SK-N-SH (cell line): ENCODE measurements at regions of chr13 and their contacts with region 1.

Region 1: DNA sequence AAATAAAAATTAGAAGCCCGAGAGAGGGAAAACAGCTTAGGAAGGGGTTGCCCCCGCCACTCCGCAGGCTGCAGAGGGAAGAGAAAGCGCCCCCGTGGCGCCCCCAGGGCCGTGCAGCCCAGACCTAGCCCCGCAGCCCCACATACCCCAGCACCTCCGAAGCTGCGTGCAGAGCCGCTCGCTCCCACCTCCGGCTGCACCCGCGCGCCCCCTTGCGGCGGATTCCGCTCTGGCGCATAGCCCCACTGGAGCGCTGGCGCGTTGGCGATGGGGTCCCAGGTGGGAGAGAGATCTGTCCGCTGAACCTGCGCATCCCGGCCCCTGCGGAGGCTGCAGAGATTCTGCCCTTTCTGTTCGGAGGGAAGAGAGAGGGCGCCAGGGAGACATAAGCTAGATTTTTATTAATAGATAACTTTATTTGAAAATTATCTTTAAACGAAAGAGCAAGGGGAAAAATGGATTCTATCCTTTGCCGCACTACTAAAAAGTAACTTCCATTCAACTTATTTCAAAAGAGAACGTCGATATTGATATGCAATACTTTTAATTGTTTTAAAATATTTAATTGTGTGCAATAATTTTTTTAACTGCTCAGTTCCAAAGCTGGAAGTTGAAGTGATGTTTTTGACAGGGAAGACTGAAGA is 11.7 kb upstream of the CLN5 start:
- DNase-seq: peak; percentile 92
- H3K4me3 ChIP-seq: peak overlapping the region; percentile 38 to 53; a peak in 3 of 4 replicates
- H3K27ac ChIP-seq: no peak overlapping the region
- H3K4me1 ChIP-seq: peaks cover 0 to 5% of the 10 kb centered on the region in 2 experiments; a peak in 2 of 4 replicates
- H3K27me3 ChIP-seq: no peaks in the 10 kb centered on the region
- CTCF ChIP-seq: peak; percentile 93
- EP300 ChIP-seq: no peak
- RAD21 ChIP-seq: peak; percentile 69

Region 2: DNA sequence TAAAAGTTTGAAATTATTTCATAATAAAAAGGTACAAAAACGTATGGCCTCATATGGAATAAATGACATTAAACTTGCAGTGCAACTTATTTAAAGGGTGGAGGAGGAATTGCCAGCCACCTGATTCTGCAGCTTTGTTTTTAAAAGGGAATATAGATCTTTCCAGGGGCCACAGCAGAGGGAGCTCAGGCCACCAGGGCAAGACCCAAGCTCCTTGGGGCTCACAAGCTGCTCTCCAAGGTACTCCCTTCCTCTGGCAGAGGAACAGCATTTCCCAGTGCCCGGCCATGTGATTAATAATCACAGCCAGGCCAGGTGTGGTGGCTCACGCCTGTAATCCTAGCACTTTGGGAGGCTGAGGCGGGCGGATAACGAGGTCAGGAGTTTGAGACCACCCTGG is 25.7 kb before region 1 on chr13:
- CTCF ChIA-PET with region 1: interaction called, 11 read pairs
- POLR2A ChIA-PET with region 1: no interaction called
- DNase-seq: no peak
- H3K4me3 ChIP-seq: no peak overlapping the region
- H3K27ac ChIP-seq: no peak overlapping the region
- H3K4me1 ChIP-seq: no peaks in the 10 kb centered on the region
- H3K27me3 ChIP-seq: no peaks in the 10 kb centered on the region
- CTCF ChIP-seq: no peak
- EP300 ChIP-seq: no peak
- RAD21 ChIP-seq: no peak

Region 3: GRCh38 chr13:76991796-76992547 is 11.8 kb after region 1 on chr13 and contains the start of gene CLN5:
- CTCF ChIA-PET with region 1: interaction called, 34 read pairs
- POLR2A ChIA-PET with region 1: no interaction called
- DNase-seq: peak; percentile 97
- H3K4me3 ChIP-seq: peak within 1 kb of the TSS; percentile 86 to 94
- H3K27ac ChIP-seq: peak within 1 kb of the TSS; percentile 74 to 79
- H3K4me1 ChIP-seq: peaks cover 11 to 13% of the 10 kb centered on the region in 2 experiments; a peak in 3 of 4 replicates
- H3K27me3 ChIP-seq: no peaks in the 10 kb centered on the region
- CTCF ChIP-seq: no peak
- EP300 ChIP-seq: 0 out of 4 replicates have a peak, but pooled peaks of 1 of the 2 experiments have one; percentile 15
- RAD21 ChIP-seq: no peak
- polyA plus RNA-seq, gene CLN5: 11.6 and 13.3 TPM in 2 replicates

Region 4: DNA sequence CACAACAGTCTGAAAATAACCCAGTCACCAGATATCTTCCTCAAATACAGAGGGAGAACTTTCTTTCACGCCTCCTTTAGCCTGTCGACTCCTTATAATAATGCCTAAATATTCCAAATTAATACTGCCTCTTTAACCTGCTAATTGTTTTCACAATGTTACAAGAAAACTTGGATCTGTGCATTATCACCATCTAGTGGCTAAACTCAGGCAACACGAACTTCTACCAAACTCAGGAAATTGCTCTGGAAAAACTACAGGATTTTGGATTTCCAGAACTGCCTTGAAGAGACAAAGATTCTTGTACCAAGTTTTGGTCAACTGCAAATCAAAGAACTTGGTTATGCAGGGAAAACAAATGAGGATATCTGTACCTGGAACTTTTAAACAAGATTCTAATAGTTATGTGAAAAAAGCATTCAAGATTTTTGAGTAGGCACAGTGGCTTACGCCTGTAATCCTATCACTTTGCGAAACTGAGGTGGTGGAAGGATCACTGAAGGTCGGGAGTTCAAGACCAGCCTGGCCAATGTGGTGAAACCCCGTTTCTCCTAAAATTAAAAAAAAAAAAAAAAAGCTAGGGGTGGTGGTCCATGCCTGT is 22.5 kb after region 1 on chr13:
- CTCF ChIA-PET with region 1: interaction called, 17 read pairs
- POLR2A ChIA-PET with region 1: no interaction called
- DNase-seq: peak; percentile 30
- H3K4me3 ChIP-seq: no peak overlapping the region
- H3K27ac ChIP-seq: peak overlapping the region in 1 of 2 experiments; percentile 39; a peak in 1 of 4 replicates
- H3K4me1 ChIP-seq: peaks cover 0 to 6% of the 10 kb centered on the region in 2 experiments; a peak in 2 of 4 replicates
- H3K27me3 ChIP-seq: no peaks in the 10 kb centered on the region
- CTCF ChIP-seq: peak; percentile 76
- EP300 ChIP-seq: no peak
- RAD21 ChIP-seq: peak; percentile 59